ENCODE measurements at regions of chr9 and their contacts with region 1.

Region 1: DNA sequence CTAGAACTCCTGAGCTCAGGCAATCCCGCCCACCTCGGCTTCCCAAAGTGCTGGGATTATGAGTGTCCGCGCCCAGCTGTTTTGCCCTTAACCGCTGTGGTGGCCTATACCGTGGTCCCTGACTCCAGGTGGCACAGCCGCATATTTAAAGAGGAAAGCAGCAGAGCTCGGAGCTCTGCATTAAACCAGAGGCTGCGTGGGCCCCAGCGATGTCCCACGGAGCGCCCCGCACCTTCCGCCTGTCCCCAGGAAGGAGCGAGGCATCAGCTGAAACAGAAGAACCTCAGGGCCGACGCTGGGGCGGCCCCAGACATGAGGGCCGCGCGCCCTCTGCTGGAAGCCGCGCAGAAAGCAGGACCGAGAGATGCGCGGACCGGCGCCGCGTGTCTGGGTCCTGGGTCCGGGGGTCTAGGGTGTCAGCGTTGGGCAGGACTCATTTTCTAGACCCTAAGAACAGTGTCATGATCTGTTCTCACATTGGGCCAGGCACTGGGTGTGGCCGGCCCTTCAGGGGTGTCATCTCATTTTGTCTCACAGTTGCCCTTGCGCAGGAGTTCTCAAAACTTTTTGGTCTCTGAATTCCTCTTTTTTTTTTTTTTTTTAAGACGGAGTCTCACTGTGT is 37.7 kb downstream of the LAMC3 start:
- DNase-seq: peak; percentile 13
- H3K4me3 ChIP-seq: no peak overlapping the region
- H3K27ac ChIP-seq: no peak overlapping the region
- H3K27me3 ChIP-seq: peaks cover 14% of the 10 kb centered on the region
- CTCF ChIP-seq: peak; percentile 95

Region 2: GRCh38 chr9:130707225-130707976 is 339.3 kb before region 1 on chr9:
- CTCF ChIA-PET with region 1: interaction called, 34 read pairs
- POLR2A ChIA-PET with region 1: no interaction called
- DNase-seq: peak; percentile 54
- H3K4me3 ChIP-seq: no peak overlapping the region
- H3K27ac ChIP-seq: no peak overlapping the region
- H3K27me3 ChIP-seq: no peaks in the 10 kb centered on the region
- CTCF ChIP-seq: peak; percentile 72

Region 3: DNA sequence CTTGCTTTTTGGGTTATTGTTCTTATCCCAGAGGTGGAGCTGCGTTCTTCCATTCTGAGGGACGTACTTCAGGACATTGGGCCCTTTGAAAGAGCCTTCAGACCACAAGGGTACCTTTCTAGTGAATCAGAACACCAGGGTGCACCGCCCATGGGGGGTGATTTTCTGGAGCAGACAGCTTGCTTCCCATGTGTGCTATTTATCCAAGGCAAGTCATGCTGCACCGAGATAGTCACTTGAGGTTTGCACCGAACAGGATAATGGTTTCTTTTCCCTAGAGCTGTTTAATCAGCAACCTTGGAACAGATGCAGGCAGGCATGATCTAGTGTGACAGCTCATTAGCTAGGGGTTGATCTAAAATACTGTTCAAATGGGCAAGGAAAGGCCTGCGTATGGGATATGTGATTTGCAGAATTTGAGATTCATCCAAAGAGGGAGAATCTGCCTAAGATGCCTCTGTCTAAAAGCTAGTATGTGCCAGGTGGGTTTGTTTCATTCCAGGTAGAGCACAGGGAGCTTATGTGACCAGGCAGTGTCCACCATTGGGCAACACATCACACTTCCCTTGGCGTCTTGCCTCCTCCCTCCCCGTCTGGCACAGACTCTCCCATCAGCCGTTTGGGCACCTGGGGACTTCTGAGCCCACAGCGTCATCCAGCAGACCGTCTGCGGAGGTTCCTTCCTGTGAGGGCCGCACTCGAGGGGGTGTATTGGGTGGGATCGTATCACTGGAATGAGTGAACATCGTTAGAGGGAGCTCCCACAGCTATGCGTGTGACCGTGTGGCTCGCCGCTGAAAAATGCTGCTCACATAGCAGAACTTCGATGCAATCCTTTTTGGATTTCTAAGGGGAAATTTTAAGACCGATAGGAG is 188.6 kb before region 1 on chr9:
- CTCF ChIA-PET with region 1: interaction called, 17 read pairs
- POLR2A ChIA-PET with region 1: interaction called, 3 read pairs
- DNase-seq: peak; percentile 82
- H3K4me3 ChIP-seq: 0 out of 2 replicates have a peak overlapping the region, but pooled peaks have one; percentile 7
- H3K27ac ChIP-seq: peak overlapping the region; percentile 94
- H3K27me3 ChIP-seq: no peaks in the 10 kb centered on the region
- CTCF ChIP-seq: no peak

Region 4: DNA sequence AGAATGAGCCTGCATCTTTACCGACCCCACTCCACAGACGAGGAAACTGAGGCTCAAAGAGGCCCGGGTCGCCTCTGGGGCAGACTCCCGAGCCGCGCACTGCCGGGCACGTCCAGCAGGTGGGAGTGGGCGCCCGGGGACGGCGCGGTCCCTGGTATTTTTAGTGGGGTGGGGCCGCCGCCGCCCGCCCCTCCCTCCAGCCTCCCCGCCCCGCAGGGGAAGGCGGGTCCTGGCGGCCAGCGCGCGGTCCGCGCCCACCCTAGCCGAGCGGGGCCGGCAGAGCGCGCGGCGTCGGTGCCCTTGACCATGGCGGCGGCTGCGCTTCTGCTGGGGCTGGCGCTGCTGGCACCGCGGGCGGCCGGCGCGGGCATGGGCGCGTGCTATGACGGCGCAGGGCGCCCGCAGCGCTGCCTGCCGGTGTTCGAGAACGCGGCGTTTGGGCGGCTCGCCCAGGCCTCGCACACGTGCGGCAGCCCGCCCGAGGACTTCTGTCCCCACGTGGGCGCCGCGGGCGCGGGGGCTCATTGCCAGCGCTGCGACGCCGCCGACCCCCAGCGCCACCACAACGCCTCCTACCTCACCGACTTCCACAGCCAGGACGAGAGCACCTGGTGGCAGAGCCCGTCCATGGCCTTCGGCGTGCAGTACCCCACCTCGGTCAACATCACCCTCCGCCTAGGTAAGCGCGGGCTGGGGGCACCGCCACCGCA is 37.6 kb before region 1 on chr9 and contains the start of gene LAMC3:
- CTCF ChIA-PET with region 1: interaction called, 11 read pairs
- POLR2A ChIA-PET with region 1: no interaction called
- DNase-seq: no peak
- H3K4me3 ChIP-seq: peak within 1 kb of the TSS; percentile 13
- H3K27ac ChIP-seq: no peak within 1 kb of the TSS
- H3K27me3 ChIP-seq: peaks cover 59% of the 10 kb centered on the region
- CTCF ChIP-seq: peak; percentile 32
- polyA plus RNA-seq, gene LAMC3: not detected in 2 replicates

Region 5: GRCh38 chr9:131056781-131057506 is 10.3 kb after region 1 on chr9:
- CTCF ChIA-PET with region 1: interaction called, 14 read pairs
- POLR2A ChIA-PET with region 1: no interaction called
- DNase-seq: no peak
- H3K4me3 ChIP-seq: no peak overlapping the region
- H3K27ac ChIP-seq: no peak overlapping the region
- H3K27me3 ChIP-seq: peaks cover 4% of the 10 kb centered on the region
- CTCF ChIP-seq: no peak

Measured in AG04450 (cell line).